Naive thymus-derived CD4-positive, alpha-beta T cell (primary cell): ENCODE measurements at regions of chr11 and their contacts with region 1.

Region 1: DNA sequence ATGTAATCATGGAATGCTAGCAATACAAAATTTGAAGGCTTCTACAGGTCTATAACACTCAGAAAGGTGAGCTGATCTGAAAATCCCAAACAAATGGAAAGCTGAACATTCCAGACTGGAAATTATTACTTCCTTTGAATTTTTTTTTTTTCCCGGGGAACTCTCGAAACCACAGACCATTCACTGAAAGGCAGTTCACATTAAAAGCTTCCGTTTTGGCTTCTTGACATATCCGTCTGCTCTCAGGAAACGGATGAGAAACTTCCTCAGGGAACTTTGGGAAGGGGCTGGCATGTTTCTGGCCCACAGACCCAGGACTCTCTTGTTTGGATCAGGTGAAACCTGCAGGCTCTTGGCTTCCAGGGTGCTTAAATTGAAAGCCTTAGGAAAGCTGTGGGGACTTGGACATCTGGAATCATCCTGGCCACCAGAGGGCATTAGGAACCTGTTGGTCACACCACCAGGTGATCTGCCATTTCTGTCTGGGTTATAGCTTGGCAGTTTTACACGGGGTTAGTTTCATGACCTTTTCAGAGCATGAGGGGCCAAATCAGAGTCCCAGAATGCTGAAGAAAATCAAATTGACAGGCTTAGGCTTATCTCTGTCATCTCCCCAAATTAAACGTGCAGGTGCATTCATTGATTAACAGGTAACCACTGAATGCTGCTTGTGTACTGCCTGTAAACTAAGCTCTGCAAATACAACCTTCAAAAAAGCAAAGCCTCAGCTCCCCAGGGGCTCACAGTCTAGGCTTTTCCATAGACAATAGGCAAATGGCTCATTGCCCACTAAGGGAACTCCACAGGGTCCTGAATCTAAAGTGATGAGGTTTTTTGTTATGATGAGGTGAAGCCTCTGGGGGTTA is 22.7 kb upstream of the GRAMD1B start:
- DNase-seq: peak; percentile 23 to 70 (median 48)
- ATAC-seq: peak; percentile 79
- H3K4me3 ChIP-seq: no peak overlapping the region
- H3K4me3 Mint-ChIP-seq: peak overlapping the region in 2 of 10 donors; percentile 59 to 82
- H3K27ac ChIP-seq: no peak overlapping the region
- H3K27ac Mint-ChIP-seq: peak overlapping the region in 1 of 9 donors; percentile 81
- H3K4me1 ChIP-seq: no peaks in the 10 kb centered on the region
- H3K4me1 Mint-ChIP-seq: peaks cover 0 to 65% (median 0%) of the 10 kb centered on the region in 7 donors
- H3K27me3 ChIP-seq: no peaks in the 10 kb centered on the region
- H3K27me3 Mint-ChIP-seq: peaks cover 0 to 12% (median 0%) of the 10 kb centered on the region in 5 donors

Region 2: DNA sequence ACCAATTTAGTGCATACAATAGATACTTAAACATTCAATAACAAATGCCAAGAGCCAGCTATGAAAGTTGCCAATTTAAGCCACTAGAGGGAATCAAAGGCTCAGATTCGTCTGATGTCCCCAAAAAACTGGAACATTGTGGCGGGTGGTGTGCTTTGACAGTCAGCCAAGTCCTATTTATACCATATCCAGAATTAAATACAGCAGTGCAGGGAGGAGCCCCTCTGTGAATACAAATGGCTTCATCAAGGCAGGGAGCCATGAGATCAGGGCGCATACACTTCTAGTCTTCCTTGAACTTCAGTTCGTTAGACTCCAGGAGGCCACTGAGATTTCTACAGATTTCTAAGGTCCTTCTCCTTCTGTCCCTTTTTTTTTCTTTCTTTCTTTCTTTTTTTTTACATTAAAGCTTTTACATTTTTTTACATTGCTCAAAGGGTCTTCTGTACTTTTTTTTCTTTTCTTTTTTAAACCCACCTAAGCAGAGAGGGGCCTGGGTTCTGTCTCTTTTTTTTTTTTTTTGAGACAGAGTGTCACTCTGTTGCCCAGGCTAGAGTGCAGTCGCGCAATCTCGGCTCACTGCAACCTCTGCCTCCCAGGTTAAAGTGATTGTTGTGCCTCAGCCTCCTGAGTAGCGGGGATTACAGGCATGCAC is 303.9 kb before region 1 on chr11:
- CTCF ChIA-PET with region 1: no interaction called
- POLR2A ChIA-PET with region 1: no interaction called
- intact Hi-C with region 1: loop called in 1 of 2 experiments (anchors 10 kb)
- DNase-seq: peak in 7 of 9 donors; percentile 38 to 63 (median 51)
- ATAC-seq: peak; percentile 76
- H3K4me3 ChIP-seq: no peak overlapping the region
- H3K4me3 Mint-ChIP-seq: peak overlapping the region in 5 of 10 donors; percentile 14 to 63 (median 14)
- H3K27ac ChIP-seq: no peak overlapping the region
- H3K27ac Mint-ChIP-seq: peak overlapping the region in 8 of 9 donors; percentile 8 to 91 (median 51)
- H3K4me1 ChIP-seq: peaks cover 0 to 15% of the 10 kb centered on the region in 2 donors
- H3K4me1 Mint-ChIP-seq: peaks cover 16 to 43% (median 38%) of the 10 kb centered on the region in 7 donors
- H3K27me3 ChIP-seq: no peaks in the 10 kb centered on the region
- H3K27me3 Mint-ChIP-seq: peaks cover 0 to 7% (median 0%) of the 10 kb centered on the region in 5 donors

Region 3: GRCh38 chr11:123357961-123358841 is 49.2 kb before region 1 on chr11:
- CTCF ChIA-PET with region 1: no interaction called
- POLR2A ChIA-PET with region 1: no interaction called
- intact Hi-C with region 1: loop called in 1 of 2 experiments (anchors 2 kb)
- DNase-seq: peak in 1 of 9 donors; percentile 64
- ATAC-seq: peak; percentile 59
- H3K4me3 ChIP-seq: peak overlapping the region; percentile 56
- H3K4me3 Mint-ChIP-seq: peak overlapping the region; percentile 4 to 98 (median 72)
- H3K27ac ChIP-seq: no peak overlapping the region
- H3K27ac Mint-ChIP-seq: peak overlapping the region in 1 of 9 donors; percentile 92
- H3K4me1 ChIP-seq: peaks cover 0 to 16% of the 10 kb centered on the region in 2 donors
- H3K4me1 Mint-ChIP-seq: peaks cover 8 to 61% (median 15%) of the 10 kb centered on the region in 7 donors
- H3K27me3 ChIP-seq: peaks cover 0 to 2% of the 10 kb centered on the region in 2 donors
- H3K27me3 Mint-ChIP-seq: peaks cover 0 to 55% (median 46%) of the 10 kb centered on the region in 5 donors

Region 4: GRCh38 chr11:123429913-123430720 is 22.8 kb after region 1 on chr11 and contains the start of gene GRAMD1B:
- CTCF ChIA-PET with region 1: interaction called, 21 read pairs
- POLR2A ChIA-PET with region 1: interaction called, 3 read pairs
- intact Hi-C with region 1: loop called (anchors 1 kb)
- DNase-seq: peak; percentile 60 to 84 (median 78)
- ATAC-seq: peak; percentile 84
- H3K4me3 ChIP-seq: peak within 1 kb of the TSS; percentile 53
- H3K4me3 Mint-ChIP-seq: peak within 1 kb of the TSS; percentile 85 to 99 (median 88)
- H3K27ac ChIP-seq: peak within 1 kb of the TSS; percentile 60
- H3K27ac Mint-ChIP-seq: peak within 1 kb of the TSS; percentile 46 to 94 (median 76)
- H3K4me1 ChIP-seq: peaks cover 0 to 12% of the 10 kb centered on the region in 2 donors
- H3K4me1 Mint-ChIP-seq: peaks cover 15 to 65% (median 25%) of the 10 kb centered on the region in 7 donors
- H3K27me3 ChIP-seq: no peaks in the 10 kb centered on the region
- H3K27me3 Mint-ChIP-seq: no peaks in the 10 kb centered on the region
- total RNA-seq, gene GRAMD1B: 9.7 to 88.9 (median 14.0) TPM

Region 5: GRCh38 chr11:123478352-123478987 is 71.1 kb after region 1 on chr11:
- CTCF ChIA-PET with region 1: interaction called, 190 read pairs
- POLR2A ChIA-PET with region 1: interaction called, 8 read pairs
- intact Hi-C with region 1: loop called (anchors 1 kb)
- DNase-seq: peak in 7 of 9 donors; percentile 27 to 61 (median 50)
- ATAC-seq: peak; percentile 64
- H3K4me3 ChIP-seq: no peak overlapping the region
- H3K4me3 Mint-ChIP-seq: peak overlapping the region in 1 of 10 donors; percentile 39
- H3K27ac ChIP-seq: no peak overlapping the region
- H3K27ac Mint-ChIP-seq: peak overlapping the region in 1 of 9 donors; percentile 30
- H3K4me1 ChIP-seq: no peaks in the 10 kb centered on the region
- H3K4me1 Mint-ChIP-seq: peaks cover 0 to 59% (median 5%) of the 10 kb centered on the region in 7 donors
- H3K27me3 ChIP-seq: no peaks in the 10 kb centered on the region
- H3K27me3 Mint-ChIP-seq: no peaks in the 10 kb centered on the region

Region 6: DNA sequence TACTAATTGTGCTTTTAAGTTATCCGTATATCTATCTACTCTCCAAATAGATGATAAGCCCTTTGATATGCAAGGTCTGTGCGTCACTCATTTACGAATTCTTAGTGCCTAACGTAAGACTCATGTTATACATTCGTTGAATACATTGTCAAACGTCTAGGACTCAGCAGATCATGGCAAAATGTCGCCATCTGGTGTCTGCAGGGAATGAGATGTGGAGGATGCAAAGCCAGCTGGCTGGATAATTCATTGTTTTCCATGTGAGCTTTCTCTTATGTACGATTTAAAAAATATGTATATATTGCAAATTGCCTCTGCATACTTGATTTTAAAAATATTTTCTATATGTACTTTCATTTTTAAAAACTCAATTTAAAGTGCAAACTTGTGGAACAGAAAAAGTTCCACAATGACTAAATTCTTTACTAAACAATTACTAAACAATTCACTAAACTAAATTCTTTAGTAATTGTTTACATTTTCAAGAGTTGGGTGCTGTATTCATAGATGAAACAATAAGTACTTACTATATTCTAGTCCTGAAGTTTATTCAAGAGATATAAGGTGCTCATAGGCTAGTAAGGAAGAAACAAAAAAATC is 300.3 kb after region 1 on chr11:
- CTCF ChIA-PET with region 1: no interaction called
- POLR2A ChIA-PET with region 1: no interaction called
- intact Hi-C with region 1: loop called in 1 of 2 experiments (anchors 2 kb)
- DNase-seq: peak; percentile 29 to 70 (median 58)
- ATAC-seq: peak; percentile 63
- H3K4me3 ChIP-seq: no peak overlapping the region
- H3K4me3 Mint-ChIP-seq: no peak overlapping the region
- H3K27ac ChIP-seq: no peak overlapping the region
- H3K27ac Mint-ChIP-seq: peak overlapping the region in 1 of 9 donors; percentile 18
- H3K4me1 ChIP-seq: no peaks in the 10 kb centered on the region
- H3K4me1 Mint-ChIP-seq: peaks cover 0 to 4% (median 0%) of the 10 kb centered on the region in 7 donors
- H3K27me3 ChIP-seq: no peaks in the 10 kb centered on the region
- H3K27me3 Mint-ChIP-seq: peaks cover 9 to 21% (median 17%) of the 10 kb centered on the region in 5 donors